ENCODE measurements at regions of chr6 and their contacts with region 1.

Region 1: DNA sequence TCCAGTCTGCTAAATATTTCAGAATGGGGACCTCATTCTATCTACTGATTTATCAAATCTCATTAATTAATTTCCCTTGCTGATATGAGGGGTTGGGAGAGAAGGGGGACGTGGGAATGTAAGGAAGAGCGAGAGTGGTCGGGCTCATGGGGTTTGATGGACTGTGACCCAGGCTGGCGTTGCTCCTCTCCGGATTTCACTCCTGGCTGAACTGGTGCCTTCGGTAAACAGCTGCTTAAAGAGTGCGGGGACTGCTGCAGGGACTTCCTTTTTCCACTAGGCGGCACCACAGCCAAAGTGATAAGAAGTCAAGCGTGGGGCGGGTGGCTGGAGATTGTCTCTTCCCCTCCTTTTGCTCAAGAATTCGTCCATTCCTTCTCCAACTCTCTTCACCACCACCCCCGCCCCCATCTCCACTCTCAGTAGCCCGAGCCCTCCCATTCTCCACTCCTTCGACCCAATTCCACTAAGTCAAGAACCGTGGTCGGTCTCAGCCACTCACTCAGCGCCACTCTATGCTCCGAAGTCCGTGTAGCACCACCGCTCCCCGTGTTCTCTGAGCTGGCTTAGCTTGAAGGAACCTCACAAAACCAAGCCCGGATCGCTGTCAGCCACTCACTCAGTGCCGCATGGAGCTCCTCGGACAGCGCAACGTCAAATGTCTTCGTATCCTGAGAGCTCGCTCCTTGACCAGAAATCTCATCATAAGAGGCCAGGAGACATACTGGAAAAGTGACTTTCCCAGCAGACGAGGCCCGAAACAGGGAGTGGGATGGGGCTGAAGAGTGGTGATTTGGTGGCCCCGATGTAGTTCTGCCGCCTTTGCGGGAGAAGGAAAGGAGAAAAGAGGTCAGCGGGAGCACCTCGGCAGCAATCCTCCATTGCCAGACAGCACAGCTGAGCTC is 9.7 kb downstream of the TRIM31 start:
- DNase-seq: peak; percentile 79
- H3K4me3 Mint-ChIP-seq: peak overlapping the region; percentile 82
- H3K27ac Mint-ChIP-seq: peak overlapping the region; percentile 51
- H3K4me1 Mint-ChIP-seq: peaks cover 43% of the 10 kb centered on the region
- H3K27me3 Mint-ChIP-seq: peaks cover 55% of the 10 kb centered on the region

Region 2: DNA sequence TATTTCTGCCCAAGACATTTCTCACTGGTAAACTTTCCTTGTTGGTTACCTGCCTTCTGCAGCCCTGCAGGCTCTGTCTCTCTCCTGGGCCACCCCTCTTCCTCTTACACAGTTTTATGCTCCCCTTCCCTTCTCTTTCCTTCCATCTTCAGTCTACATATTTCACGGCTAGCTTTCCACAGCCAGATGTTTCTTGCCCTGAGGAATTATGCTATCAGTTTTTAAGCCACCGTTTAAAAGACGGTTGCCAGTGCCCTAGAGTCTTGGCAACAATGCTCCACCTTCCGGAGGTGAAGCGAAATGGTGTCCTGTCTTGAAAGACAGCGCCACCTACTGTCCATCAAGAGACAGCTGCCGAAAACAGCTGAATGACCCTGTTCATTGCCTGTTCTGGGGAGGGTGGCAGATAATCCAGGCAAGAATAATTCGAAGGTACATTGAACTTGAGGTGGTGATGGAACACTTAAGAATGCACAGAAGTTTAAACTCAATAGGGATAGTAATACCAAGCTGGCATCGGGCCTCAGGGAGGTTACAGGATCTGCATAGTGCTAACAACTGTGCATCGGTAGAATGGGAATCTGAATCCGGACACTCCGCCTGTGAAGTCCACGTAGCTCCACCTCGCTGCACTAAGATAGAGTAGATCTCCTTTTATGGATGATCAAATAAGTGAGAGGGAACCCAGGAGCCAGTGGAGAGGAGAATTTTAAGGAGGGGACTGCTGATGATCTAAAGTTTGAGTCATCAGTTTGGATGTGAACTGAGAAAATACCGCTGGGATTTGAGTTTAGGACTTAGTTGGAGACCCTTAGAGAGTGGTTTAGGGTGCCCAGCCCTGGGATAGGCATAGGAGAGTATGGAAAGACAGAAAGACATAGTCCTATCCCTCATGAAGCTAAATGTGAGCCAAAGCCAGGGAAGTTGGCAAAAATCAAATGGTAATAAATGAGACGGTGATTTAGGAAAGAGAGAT is 28.0 kb after region 1 on chr6:
- intact Hi-C with region 1: loop called (anchors 1 kb)
- DNase-seq: peak; percentile 57
- H3K4me3 Mint-ChIP-seq: no peak overlapping the region
- H3K27ac Mint-ChIP-seq: no peak overlapping the region
- H3K4me1 Mint-ChIP-seq: peaks cover 30% of the 10 kb centered on the region
- H3K27me3 Mint-ChIP-seq: peaks cover 65% of the 10 kb centered on the region

Region 3: GRCh38 chr6:30154709-30155519 is 51.7 kb after region 1 on chr6:
- intact Hi-C with region 1: no loop called
- DNase-seq: no peak
- H3K4me3 Mint-ChIP-seq: no peak overlapping the region
- H3K27ac Mint-ChIP-seq: no peak overlapping the region
- H3K4me1 Mint-ChIP-seq: peaks cover 30% of the 10 kb centered on the region
- H3K27me3 Mint-ChIP-seq: peaks cover 4% of the 10 kb centered on the region

Region 4: GRCh38 chr6:30212865-30213666 is 109.8 kb after region 1 on chr6 and contains the start of gene TRIM26:
- intact Hi-C with region 1: loop called (anchors 2 kb)
- DNase-seq: peak; percentile 98
- H3K4me3 Mint-ChIP-seq: peak within 1 kb of the TSS; percentile 88
- H3K27ac Mint-ChIP-seq: peak within 1 kb of the TSS; percentile 97
- H3K4me1 Mint-ChIP-seq: peaks cover 57% of the 10 kb centered on the region
- H3K27me3 Mint-ChIP-seq: no peaks in the 10 kb centered on the region
- total RNA-seq, gene TRIM26: 61.6 and 64.7 TPM in 2 replicates

Region 5: GRCh38 chr6:30344868-30345671 is 241.8 kb after region 1 on chr6 and contains the start of gene RPP21:
- intact Hi-C with region 1: loop called (anchors 5 kb)
- DNase-seq: peak; percentile 84
- H3K4me3 Mint-ChIP-seq: peak within 1 kb of the TSS; percentile 91
- H3K27ac Mint-ChIP-seq: peak within 1 kb of the TSS; percentile 80
- H3K4me1 Mint-ChIP-seq: peaks cover 39% of the 10 kb centered on the region
- H3K27me3 Mint-ChIP-seq: peaks cover 5% of the 10 kb centered on the region
- total RNA-seq, gene RPP21: 54.2 and 62.8 TPM in 2 replicates

Region 6: GRCh38 chr6:30453508-30454116 is 350.4 kb after region 1 on chr6:
- intact Hi-C with region 1: loop called (anchors 5 kb)
- DNase-seq: peak; percentile 77
- H3K4me3 Mint-ChIP-seq: peak overlapping the region; percentile 25
- H3K27ac Mint-ChIP-seq: no peak overlapping the region
- H3K4me1 Mint-ChIP-seq: peaks cover 24% of the 10 kb centered on the region
- H3K27me3 Mint-ChIP-seq: peaks cover 80% of the 10 kb centered on the region

Measured in activated T-helper 1 cell treated with anti-CD3 and anti-CD28 coated beads, Interleukin-12 subunit alpha, Interleukin-12 subunit beta, Interleukin-2, Interleukin-4 antibody, amounts not matched to agents 30 ng/mL and 10 ng/mL and 1 ng/mL, durations not matched to agents 14 hours and 24 hours and 36 hours (primary cell).